ENCODE measurements at regions of chr6 and their contacts with region 1.

Region 1: GRCh38 chr6:36851149-36851614 is 11.9 kb upstream of the CPNE5 start:
- DNase-seq: peak; percentile 62 to 84 (median 66)
- ATAC-seq: peak; percentile 39
- H3K4me3 ChIP-seq: no peak overlapping the region
- H3K27ac ChIP-seq: no peak overlapping the region
- H3K4me1 ChIP-seq: peaks cover 22 to 35% of the 10 kb centered on the region in 2 experiments
- H3K27me3 ChIP-seq: no peaks in the 10 kb centered on the region
- CTCF ChIP-seq: peak; percentile 86 to 98 (median 91)
- EP300 ChIP-seq: no peak
- POLR2A ChIP-seq: no peak
- RAD21 ChIP-seq: peak; percentile 95

Region 2: DNA sequence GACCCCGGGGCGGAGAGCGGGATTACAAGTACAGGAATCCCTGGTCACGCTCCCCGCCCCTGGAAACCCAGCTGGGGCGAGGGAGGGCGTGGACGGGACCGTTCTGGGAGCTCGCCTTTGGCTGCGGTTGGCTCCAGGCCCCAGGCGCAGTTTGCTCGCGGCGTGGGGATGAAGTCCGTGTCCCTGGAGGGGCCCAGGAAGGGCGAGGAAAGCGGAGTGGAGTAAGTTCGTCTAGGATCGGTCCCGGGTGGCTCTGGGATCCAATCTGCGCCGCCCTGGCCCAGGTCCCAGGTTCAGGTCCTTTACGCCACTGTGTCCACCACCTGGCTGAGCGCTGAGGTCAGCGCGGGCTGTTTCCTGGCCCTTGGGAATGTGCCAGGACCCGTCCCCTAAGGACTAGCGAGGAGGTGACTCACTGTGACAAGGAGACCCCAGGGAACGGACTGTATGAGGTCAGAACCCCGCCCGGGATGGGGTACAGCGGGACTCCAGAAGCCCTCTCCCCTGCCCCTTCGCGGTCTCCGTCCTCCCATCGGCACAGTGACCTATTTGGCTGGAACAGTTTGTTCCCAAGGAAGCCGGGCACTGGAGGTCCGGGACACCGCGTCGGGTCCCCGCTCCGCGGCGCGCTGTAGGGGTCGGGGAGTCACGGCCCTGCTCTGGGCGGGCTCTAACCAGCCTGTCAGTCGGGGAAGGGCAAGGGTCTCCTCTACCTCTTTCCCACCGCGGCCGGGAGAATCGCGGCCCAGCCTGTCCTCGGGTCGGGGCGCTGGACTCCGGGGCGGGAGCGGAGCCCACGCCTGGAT is 172.0 kb before region 1 on chr6:
- CTCF ChIA-PET with region 1: no interaction called
- POLR2A ChIA-PET with region 1: no interaction called
- in situ Hi-C with region 1: no loop called
- intact Hi-C with region 1: no loop called
- DNase-seq: peak in 3 of 4 experiments; percentile 62 to 75 (median 64)
- ATAC-seq: peak; percentile 41
- H3K4me3 ChIP-seq: peak overlapping the region; percentile 50
- H3K27ac ChIP-seq: peak overlapping the region; percentile 68; the same call in 2 of the 3 replicates
- H3K4me1 ChIP-seq: peaks cover 33 to 40% of the 10 kb centered on the region in 2 experiments
- H3K27me3 ChIP-seq: peaks cover 18 to 30% of the 10 kb centered on the region in 2 experiments
- CTCF ChIP-seq: no peak
- EP300 ChIP-seq: no peak
- POLR2A ChIP-seq: no peak
- RAD21 ChIP-seq: no peak

Region 3: DNA sequence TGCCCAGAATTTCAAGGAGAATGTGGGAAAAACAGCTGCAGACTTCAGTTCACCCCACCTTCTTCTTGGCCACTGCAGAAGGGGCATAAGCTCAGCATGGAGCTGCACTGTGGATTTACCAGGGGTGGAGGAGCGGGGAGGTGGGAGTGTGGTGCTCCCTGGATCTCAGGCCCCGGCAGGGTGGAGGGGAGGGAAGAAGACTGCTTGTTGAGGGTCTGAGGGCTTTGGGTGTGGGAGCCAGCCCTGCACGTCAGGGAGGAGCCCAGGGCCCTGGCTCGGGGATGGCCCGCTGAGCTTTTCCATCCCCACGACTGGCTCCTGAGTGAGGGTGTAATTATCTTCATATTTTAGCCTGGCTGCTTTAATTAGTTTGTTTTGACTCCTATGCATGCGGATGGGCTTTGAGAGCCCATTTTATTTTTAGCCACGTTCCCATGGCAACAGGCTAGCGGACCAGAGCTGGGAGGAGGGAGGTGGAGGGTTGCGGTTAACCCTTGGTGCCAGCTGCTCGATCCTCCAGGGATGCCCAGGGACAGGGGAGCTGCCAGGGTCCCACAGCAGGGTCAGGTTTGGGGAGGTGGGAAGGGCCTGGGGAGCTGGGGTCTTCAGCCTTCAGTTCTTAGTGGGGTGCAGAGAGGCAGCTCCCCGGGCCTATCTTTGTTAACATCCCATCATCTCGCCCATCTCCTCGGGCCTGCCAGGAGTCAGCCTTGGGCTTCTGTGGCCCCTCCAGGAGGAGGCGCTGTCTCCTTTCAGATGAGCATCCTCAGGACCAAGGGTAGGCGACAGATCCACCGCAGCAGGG is 85.4 kb before region 1 on chr6:
- CTCF ChIA-PET with region 1: interaction called, 37 read pairs
- POLR2A ChIA-PET with region 1: interaction called, 5 read pairs
- in situ Hi-C with region 1: loop called (anchors 5 kb)
- intact Hi-C with region 1: loop called (anchors 1 kb)
- DNase-seq: peak; percentile 88 to 92 (median 91)
- ATAC-seq: peak; percentile 97
- H3K4me3 ChIP-seq: no peak overlapping the region
- H3K27ac ChIP-seq: no peak overlapping the region
- H3K4me1 ChIP-seq: peaks cover 15 to 19% of the 10 kb centered on the region in 2 experiments; a peak in 3 of 5 replicates
- H3K27me3 ChIP-seq: peaks cover 20 to 33% of the 10 kb centered on the region in 2 experiments; a peak in 4 of 5 replicates
- CTCF ChIP-seq: peak; percentile 97 to 99 (median 99)
- EP300 ChIP-seq: peak; percentile 16; the same call in 1 of the 2 replicates
- POLR2A ChIP-seq: no peak
- RAD21 ChIP-seq: peak; percentile 99 to 100

Region 4: DNA sequence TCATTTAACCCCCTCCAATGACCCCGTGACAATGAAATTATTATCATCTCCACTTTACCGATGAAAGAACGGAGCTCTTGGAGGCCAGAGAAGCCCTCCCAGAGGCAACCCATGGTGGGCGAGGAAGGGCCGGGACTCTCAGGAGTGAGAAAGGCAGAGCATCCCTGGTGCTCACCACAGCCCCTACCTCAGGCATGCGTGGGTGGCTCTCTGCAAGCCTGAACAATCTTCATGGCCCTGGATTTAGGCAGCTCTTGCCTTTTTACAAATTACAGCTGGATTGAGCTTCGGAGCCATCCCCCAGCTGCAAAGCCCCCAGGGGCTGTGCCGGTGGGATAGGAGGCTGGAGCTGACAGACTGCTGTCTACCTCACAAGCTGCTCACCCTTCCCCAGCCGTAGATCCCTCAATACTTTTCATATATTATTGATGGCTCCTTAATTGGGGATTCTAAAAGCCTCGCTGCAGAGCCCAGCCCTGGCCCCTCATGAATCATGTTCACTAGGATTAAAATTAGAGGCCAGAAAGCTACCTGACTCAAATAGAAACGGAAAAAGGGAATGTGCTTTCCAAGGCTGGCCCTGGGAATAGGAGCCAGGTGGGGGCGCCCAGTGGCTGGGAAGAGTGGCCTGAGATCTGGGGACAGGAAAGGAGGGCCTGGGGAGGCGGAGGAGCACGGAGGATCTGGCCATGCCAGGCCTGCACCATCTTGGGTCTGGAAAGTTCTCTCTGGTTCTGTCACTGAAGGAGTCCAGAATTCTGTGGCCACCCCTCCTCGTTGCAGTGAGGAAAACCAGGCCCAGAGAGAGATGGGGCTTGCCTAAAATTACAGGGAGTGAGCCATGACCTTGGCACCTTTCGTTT is 41.0 kb before region 1 on chr6:
- CTCF ChIA-PET with region 1: interaction called, 7 read pairs
- POLR2A ChIA-PET with region 1: interaction called, 3 read pairs
- in situ Hi-C with region 1: no loop called
- intact Hi-C with region 1: loop called (anchors 1 kb)
- DNase-seq: peak in 1 of 4 experiments; percentile 42
- ATAC-seq: peak; percentile 51
- H3K4me3 ChIP-seq: no peak overlapping the region
- H3K27ac ChIP-seq: no peak overlapping the region
- H3K4me1 ChIP-seq: no peaks in the 10 kb centered on the region; a peak in 2 of 5 replicates
- H3K27me3 ChIP-seq: peaks cover 0 to 12% of the 10 kb centered on the region in 2 experiments; a peak in 3 of 5 replicates
- CTCF ChIP-seq: peak; percentile 35 to 78 (median 58); a peak in 4 of 6 replicates
- EP300 ChIP-seq: no peak
- POLR2A ChIP-seq: no peak
- RAD21 ChIP-seq: peak; percentile 80 to 91

Region 5: DNA sequence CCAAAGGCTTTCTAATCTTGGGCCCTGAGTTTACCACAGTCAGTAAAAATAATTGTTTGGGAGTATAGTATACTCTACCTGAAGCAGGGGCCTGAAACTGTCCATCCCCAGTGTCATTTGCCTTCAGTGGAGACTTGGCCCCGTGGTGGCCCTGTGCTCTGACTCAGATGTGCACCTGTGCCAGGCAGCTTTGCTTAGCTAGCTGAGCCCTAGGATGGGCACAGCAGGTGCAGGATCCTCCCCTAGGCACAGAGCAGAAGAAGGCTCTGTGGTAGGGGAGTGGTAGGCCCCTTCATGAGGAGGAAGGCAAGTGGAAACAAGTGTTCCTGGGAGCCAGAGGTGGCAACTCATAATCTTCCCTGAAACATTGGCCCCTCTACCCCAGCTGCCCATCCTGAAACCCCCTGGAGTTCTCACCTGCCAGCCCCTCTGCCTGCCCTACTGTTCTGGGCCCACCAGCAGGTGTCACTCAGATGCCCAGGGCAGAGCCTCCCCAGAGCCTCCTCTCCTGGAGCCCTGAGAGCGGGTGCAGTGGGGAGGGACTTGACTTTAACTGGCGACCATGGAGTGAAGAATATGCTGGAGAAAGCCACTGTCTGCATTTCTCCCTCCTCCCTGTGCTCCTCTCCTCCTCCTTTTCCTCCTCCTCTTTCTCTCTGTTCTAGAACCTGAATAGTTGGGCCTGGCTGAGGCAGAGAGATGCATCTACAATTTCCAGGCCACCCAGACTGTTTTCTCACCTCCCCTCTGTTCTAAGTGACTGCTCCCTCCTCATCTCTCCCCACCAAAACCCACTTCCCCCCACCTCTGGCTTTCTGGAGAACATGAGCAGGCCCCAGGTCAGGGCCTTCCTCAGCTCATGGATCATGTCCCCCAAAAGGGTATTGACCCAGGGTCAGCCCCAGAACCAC is 14.8 kb before region 1 on chr6:
- CTCF ChIA-PET with region 1: interaction called, 6 read pairs
- POLR2A ChIA-PET with region 1: interaction called, 23 read pairs
- in situ Hi-C with region 1: no loop called
- intact Hi-C with region 1: no loop called
- DNase-seq: no peak
- ATAC-seq: no peak; the same call in 2 of the 3 replicates
- H3K4me3 ChIP-seq: no peak overlapping the region
- H3K27ac ChIP-seq: no peak overlapping the region
- H3K4me1 ChIP-seq: peaks cover 14 to 34% of the 10 kb centered on the region in 2 experiments
- H3K27me3 ChIP-seq: peaks cover 6 to 9% of the 10 kb centered on the region in 2 experiments; a peak in 3 of 5 replicates
- CTCF ChIP-seq: 0 out of 6 replicates have a peak, but pooled peaks of 1 of the 3 experiments have one; percentile 3
- EP300 ChIP-seq: no peak
- POLR2A ChIP-seq: no peak
- RAD21 ChIP-seq: no peak

Region 6: DNA sequence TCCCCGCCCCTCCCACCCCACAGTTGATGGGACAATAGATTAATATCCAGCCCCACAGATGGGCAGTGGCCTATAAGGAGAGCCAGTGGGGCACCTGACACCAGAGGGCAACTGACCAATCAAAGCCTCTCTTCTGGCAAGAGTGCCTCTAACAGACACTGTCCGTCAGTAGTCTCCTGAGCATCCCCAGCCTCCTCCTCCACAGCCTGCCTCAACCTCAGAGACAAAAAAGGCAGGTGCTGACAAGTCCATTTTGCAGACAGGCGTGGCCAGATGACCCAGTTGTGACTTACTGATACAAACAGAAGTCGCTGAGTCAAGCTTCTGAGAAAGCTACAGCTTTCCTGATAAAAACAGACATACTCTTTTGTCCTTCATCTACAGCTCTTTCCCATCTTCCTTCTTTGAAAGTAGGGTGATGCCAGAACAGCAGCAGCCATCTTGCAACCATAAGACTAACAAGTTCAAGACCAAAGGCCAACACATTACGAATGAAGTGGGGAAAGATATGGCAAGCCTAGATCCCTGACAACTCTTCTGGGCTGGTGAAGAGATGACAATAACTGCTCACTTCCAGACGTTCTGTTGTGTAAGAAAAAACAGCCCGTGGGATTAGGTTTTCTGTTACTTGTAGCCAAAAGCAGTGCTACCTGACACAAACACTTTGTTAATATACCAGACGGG is 11.1 kb after region 1 on chr6:
- CTCF ChIA-PET with region 1: no interaction called
- POLR2A ChIA-PET with region 1: interaction called, 60 read pairs
- in situ Hi-C with region 1: no loop called
- intact Hi-C with region 1: no loop called
- DNase-seq: peak; percentile 82 to 97 (median 88)
- ATAC-seq: peak; percentile 96
- H3K4me3 ChIP-seq: no peak overlapping the region
- H3K27ac ChIP-seq: peak overlapping the region; percentile 84
- H3K4me1 ChIP-seq: peaks cover 30 to 42% of the 10 kb centered on the region in 2 experiments
- H3K27me3 ChIP-seq: no peaks in the 10 kb centered on the region
- CTCF ChIP-seq: no peak
- EP300 ChIP-seq: peak; percentile 96
- POLR2A ChIP-seq: peak; percentile 46; the same call in 1 of the 2 replicates
- RAD21 ChIP-seq: no peak; a peak in 1 of 4 replicates

Region 7: GRCh38 chr6:36874443-36875249 is 23.5 kb after region 1 on chr6 and contains the start of gene PPIL1:
- CTCF ChIA-PET with region 1: no interaction called
- POLR2A ChIA-PET with region 1: interaction called, 32 read pairs
- in situ Hi-C with region 1: no loop called
- intact Hi-C with region 1: no loop called
- DNase-seq: peak; percentile 95 to 96 (median 96)
- ATAC-seq: peak; percentile 91
- H3K4me3 ChIP-seq: peak within 1 kb of the TSS; percentile 76
- H3K27ac ChIP-seq: peak within 1 kb of the TSS; percentile 100
- H3K4me1 ChIP-seq: peaks cover 0 to 28% of the 10 kb centered on the region in 2 experiments; a peak in 2 of 5 replicates
- H3K27me3 ChIP-seq: no peaks in the 10 kb centered on the region
- CTCF ChIP-seq: 0 out of 6 replicates have a peak, but pooled peaks of 1 of the 3 experiments have one; percentile 0
- EP300 ChIP-seq: no peak
- POLR2A ChIP-seq: peak; percentile 90
- RAD21 ChIP-seq: 0 out of 4 replicates have a peak, but pooled peaks of 1 of the 2 experiments have one; percentile 9
- polyA plus RNA-seq, gene PPIL1: 195 to 205 TPM

Region 8: DNA sequence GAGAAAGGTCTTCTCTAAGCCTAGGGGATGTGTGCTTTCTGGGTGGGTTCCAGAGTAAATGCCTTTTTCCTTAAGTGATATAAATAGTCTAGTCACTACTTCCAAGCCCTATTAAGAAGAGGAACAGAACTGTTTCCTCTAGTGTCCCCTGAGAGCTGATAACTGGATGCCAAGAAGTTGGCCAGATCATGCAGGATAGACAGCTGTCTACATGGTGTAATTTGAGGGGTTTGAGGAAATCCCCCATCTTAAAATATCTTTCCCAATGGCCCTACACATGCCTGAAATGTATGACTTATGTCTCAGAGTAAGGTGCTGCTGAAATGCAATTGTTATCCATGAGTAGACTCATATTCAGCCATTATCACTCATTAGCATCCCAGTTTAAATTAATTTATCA is 298.6 kb after region 1 on chr6:
- CTCF ChIA-PET with region 1: no interaction called
- POLR2A ChIA-PET with region 1: no interaction called
- in situ Hi-C with region 1: no loop called
- intact Hi-C with region 1: no loop called
- DNase-seq: no peak
- ATAC-seq: no peak
- H3K4me3 ChIP-seq: no peak overlapping the region
- H3K27ac ChIP-seq: no peak overlapping the region
- H3K4me1 ChIP-seq: peaks cover 0 to 1% of the 10 kb centered on the region in 2 experiments; a peak in 2 of 5 replicates
- H3K27me3 ChIP-seq: no peaks in the 10 kb centered on the region
- CTCF ChIP-seq: no peak
- EP300 ChIP-seq: no peak
- POLR2A ChIP-seq: no peak
- RAD21 ChIP-seq: no peak

Measured in K562 (cell line).